Naive thymus-derived CD4-positive, alpha-beta T cell (primary cell): ENCODE measurements at regions of chr17 and their contacts with region 1.

Region 1: DNA sequence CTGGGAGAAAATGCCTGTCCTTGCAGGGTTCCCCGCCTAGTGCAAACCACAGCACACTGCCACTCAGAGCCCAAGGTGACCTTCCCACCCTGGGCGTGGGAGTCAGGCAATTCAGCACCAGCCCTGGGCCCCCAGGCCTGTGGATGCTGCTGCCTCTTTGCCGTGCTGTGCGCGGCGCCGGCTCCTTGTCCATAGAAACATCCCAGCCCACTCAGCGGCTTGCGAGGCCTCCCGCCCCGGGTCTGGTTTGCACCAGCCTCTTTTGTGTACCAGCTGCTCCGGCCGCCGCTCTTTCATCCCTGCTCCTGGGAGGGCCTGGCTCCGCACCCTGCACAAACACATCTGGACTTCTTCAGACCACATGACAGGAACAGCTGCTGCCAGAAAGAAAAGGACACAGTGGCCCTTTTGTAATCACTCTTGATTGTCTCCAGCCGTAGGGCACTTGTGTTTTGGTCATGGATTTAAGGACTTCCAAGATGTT is 75.4 kb upstream of the SDK2 start:
- DNase-seq: no peak
- ATAC-seq: no peak
- H3K4me3 ChIP-seq: no peak overlapping the region
- H3K4me3 Mint-ChIP-seq: peak overlapping the region in 4 of 10 donors; percentile 30 to 69 (median 59)
- H3K27ac ChIP-seq: no peak overlapping the region
- H3K27ac Mint-ChIP-seq: peak overlapping the region in 7 of 9 donors; percentile 48 to 98 (median 82)
- H3K4me1 ChIP-seq: peaks cover 18 to 45% of the 10 kb centered on the region in 2 donors
- H3K4me1 Mint-ChIP-seq: peaks cover 20 to 66% (median 57%) of the 10 kb centered on the region in 7 donors
- H3K27me3 ChIP-seq: no peaks in the 10 kb centered on the region
- H3K27me3 Mint-ChIP-seq: peaks cover 0 to 7% (median 0%) of the 10 kb centered on the region in 5 donors

Region 2: GRCh38 chr17:73667181-73667959 is 52.3 kb before region 1 on chr17:
- CTCF ChIA-PET with region 1: no interaction called
- POLR2A ChIA-PET with region 1: no interaction called
- intact Hi-C with region 1: no loop called
- DNase-seq: peak in 4 of 9 donors; percentile 17 to 39 (median 27)
- ATAC-seq: peak; percentile 73
- H3K4me3 ChIP-seq: no peak overlapping the region
- H3K4me3 Mint-ChIP-seq: peak overlapping the region in 9 of 10 donors; percentile 29 to 74 (median 63)
- H3K27ac ChIP-seq: no peak overlapping the region
- H3K27ac Mint-ChIP-seq: peak overlapping the region in 6 of 9 donors; percentile 20 to 69 (median 40)
- H3K4me1 ChIP-seq: peaks cover 0 to 17% of the 10 kb centered on the region in 2 donors
- H3K4me1 Mint-ChIP-seq: peaks cover 21 to 31% (median 28%) of the 10 kb centered on the region in 7 donors
- H3K27me3 ChIP-seq: no peaks in the 10 kb centered on the region
- H3K27me3 Mint-ChIP-seq: peaks cover 0 to 33% (median 0%) of the 10 kb centered on the region in 5 donors

Region 3: GRCh38 chr17:73782641-73783381 is 63.2 kb after region 1 on chr17:
- CTCF ChIA-PET with region 1: no interaction called
- POLR2A ChIA-PET with region 1: interaction called, 3 read pairs
- intact Hi-C with region 1: loop called in 1 of 2 experiments (anchors 5 kb)
- DNase-seq: peak in 3 of 9 donors; percentile 8 to 26 (median 9)
- ATAC-seq: peak; percentile 10
- H3K4me3 ChIP-seq: no peak overlapping the region
- H3K4me3 Mint-ChIP-seq: peak overlapping the region in 2 of 10 donors; percentile 6 to 16
- H3K27ac ChIP-seq: no peak overlapping the region
- H3K27ac Mint-ChIP-seq: peak overlapping the region in 5 of 9 donors; percentile 22 to 84 (median 61)
- H3K4me1 ChIP-seq: peaks cover 0 to 7% of the 10 kb centered on the region in 2 donors
- H3K4me1 Mint-ChIP-seq: peaks cover 0 to 22% (median 12%) of the 10 kb centered on the region in 7 donors
- H3K27me3 ChIP-seq: no peaks in the 10 kb centered on the region
- H3K27me3 Mint-ChIP-seq: peaks cover 0 to 2% (median 0%) of the 10 kb centered on the region in 5 donors

Region 4: DNA sequence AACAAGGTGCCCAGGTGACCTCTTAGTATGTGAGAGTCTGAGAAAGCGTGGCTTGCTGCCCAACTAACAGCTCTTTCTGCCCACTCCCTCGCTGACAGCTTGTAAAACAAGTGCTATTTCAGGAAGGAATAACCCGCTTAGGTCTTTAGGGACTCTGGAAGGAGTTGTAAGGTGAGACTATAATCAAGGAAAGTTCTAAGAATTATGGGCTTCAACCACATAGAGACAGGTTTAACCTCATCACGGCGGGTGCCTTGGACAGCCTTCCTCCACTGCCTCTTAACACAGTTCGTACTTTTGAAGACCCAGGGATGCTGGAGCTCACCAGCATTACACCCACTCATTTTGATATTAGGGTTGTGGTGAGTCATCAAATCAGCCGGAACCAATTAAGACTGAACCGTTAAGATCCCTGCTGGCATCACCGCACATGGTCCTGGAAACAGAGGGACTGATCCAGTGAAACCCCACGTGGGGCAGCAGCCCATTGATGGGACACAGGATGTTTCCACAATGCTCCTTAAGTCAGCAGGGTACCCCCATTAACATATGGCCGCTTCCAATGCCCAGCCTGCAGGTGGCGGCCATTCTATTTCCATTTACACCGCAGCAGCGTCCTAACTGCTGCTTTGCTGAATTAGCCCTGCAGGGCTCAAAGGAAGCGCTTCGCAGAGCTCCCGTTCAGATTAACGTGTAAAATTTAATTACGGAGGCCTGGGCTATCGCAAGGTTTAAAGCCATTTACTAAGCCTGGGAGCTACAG is 101.2 kb after region 1 on chr17:
- CTCF ChIA-PET with region 1: interaction called, 4 read pairs
- POLR2A ChIA-PET with region 1: interaction called, 80 read pairs
- intact Hi-C with region 1: no loop called
- DNase-seq: no peak
- ATAC-seq: no peak
- H3K4me3 ChIP-seq: no peak overlapping the region
- H3K4me3 Mint-ChIP-seq: peak overlapping the region in 1 of 10 donors; percentile 85
- H3K27ac ChIP-seq: no peak overlapping the region
- H3K27ac Mint-ChIP-seq: peak overlapping the region in 2 of 9 donors; percentile 6 to 30
- H3K4me1 ChIP-seq: peaks cover 0 to 29% of the 10 kb centered on the region in 2 donors
- H3K4me1 Mint-ChIP-seq: peaks cover 0 to 54% (median 38%) of the 10 kb centered on the region in 7 donors
- H3K27me3 ChIP-seq: no peaks in the 10 kb centered on the region
- H3K27me3 Mint-ChIP-seq: peaks cover 0 to 31% (median 0%) of the 10 kb centered on the region in 5 donors

Region 5: GRCh38 chr17:73827627-73828291 is 108.1 kb after region 1 on chr17:
- CTCF ChIA-PET with region 1: interaction called, 7 read pairs
- POLR2A ChIA-PET with region 1: interaction called, 80 read pairs
- intact Hi-C with region 1: loop called in 1 of 2 experiments (anchors 2 kb)
- DNase-seq: peak in 6 of 9 donors; percentile 41 to 66 (median 54)
- ATAC-seq: peak; percentile 67
- H3K4me3 ChIP-seq: no peak overlapping the region
- H3K4me3 Mint-ChIP-seq: peak overlapping the region; percentile 2 to 89 (median 74)
- H3K27ac ChIP-seq: peak overlapping the region; percentile 73
- H3K27ac Mint-ChIP-seq: peak overlapping the region; percentile 72 to 100 (median 91)
- H3K4me1 ChIP-seq: peaks cover 19 to 73% of the 10 kb centered on the region in 2 donors
- H3K4me1 Mint-ChIP-seq: peaks cover 6 to 98% (median 83%) of the 10 kb centered on the region in 7 donors
- H3K27me3 ChIP-seq: no peaks in the 10 kb centered on the region
- H3K27me3 Mint-ChIP-seq: peaks cover 0 to 9% (median 0%) of the 10 kb centered on the region in 5 donors

Region 6: DNA sequence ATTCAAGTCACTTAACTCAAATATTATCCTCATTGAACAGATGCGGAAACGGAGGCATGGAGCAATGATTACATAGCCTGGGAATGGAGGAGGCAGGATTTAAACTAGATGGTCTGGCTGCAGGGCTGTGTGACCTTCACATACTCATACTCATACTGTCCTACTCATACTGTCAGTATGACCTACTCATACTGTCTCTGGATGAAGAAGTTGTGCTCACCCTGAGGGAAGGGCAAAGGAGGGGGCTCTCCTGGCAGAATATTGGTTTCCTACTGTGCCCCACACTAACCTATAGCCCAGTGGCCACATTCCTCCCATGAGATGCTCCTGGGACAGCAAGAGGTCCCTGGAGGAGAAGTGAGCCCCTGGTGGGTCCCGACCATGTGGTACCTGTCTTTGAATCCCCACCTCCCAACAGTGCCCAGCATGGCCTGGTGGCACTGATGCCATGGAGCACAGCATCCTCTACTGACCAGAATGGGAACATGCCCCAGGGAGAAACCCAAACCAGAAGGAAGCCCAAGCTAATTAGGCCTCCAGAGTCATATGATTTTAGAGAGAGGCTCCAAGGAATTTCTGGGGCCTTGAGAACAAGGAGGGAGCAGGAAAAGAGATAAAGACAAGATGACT is 121.9 kb after region 1 on chr17:
- CTCF ChIA-PET with region 1: interaction called, 11 read pairs
- POLR2A ChIA-PET with region 1: interaction called, 4 read pairs
- intact Hi-C with region 1: no loop called
- DNase-seq: peak in 3 of 9 donors; percentile 29 to 49 (median 33)
- ATAC-seq: peak; percentile 58
- H3K4me3 ChIP-seq: no peak overlapping the region
- H3K4me3 Mint-ChIP-seq: no peak overlapping the region
- H3K27ac ChIP-seq: no peak overlapping the region
- H3K27ac Mint-ChIP-seq: peak overlapping the region in 6 of 9 donors; percentile 12 to 63 (median 54)
- H3K4me1 ChIP-seq: no peaks in the 10 kb centered on the region
- H3K4me1 Mint-ChIP-seq: peaks cover 0 to 27% (median 13%) of the 10 kb centered on the region in 7 donors
- H3K27me3 ChIP-seq: no peaks in the 10 kb centered on the region
- H3K27me3 Mint-ChIP-seq: no peaks in the 10 kb centered on the region

Region 7: DNA sequence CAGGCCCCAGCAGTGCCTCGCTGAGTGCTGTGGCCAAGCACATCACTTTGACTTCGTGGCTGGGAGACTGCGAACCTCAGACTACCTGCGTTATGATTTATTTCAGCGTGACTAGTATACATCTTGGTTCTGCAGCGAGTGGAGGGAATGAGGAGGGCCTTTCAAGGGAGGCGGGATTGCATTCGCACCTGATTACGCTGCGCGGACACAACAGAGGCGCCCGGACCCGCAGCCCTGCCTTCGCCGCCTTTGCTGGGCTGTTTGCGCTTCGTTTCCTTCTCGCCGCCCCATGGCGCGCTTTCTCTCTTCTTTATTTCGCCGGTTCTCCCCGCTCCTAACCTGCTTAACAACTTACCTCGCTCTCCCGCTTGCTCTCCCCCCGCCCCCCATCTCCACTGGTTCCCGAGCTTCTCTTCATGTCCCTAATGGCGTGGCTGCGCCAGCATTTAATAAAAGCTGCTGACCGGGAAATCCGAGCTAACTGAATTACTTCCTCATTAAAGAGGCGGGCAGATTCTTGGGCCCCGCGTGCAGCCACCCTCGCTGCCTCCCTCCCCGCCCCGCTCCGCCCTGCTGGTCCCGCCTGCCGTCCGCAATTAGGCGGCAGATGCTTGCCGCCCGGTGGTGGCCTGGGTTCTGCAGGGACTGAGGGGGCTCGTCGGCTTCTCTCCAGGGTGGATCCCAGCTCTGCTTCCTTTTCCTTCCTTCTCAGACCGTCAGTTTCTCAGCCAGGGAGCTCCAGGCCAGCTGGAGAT is 182.2 kb after region 1 on chr17:
- CTCF ChIA-PET with region 1: no interaction called
- POLR2A ChIA-PET with region 1: interaction called, 4 read pairs
- intact Hi-C with region 1: loop called in 1 of 2 experiments (anchors 5 kb)
- DNase-seq: peak in 5 of 9 donors; percentile 5 to 21 (median 13)
- ATAC-seq: peak; percentile 73
- H3K4me3 ChIP-seq: peak overlapping the region; percentile 48
- H3K4me3 Mint-ChIP-seq: peak overlapping the region; percentile 81 to 95 (median 90)
- H3K27ac ChIP-seq: no peak overlapping the region
- H3K27ac Mint-ChIP-seq: peak overlapping the region in 3 of 9 donors; percentile 28 to 72 (median 28)
- H3K4me1 ChIP-seq: peaks cover 0 to 6% of the 10 kb centered on the region in 2 donors
- H3K4me1 Mint-ChIP-seq: peaks cover 2 to 21% (median 12%) of the 10 kb centered on the region in 7 donors
- H3K27me3 ChIP-seq: peaks cover 0 to 3% of the 10 kb centered on the region in 2 donors
- H3K27me3 Mint-ChIP-seq: peaks cover 18 to 38% (median 27%) of the 10 kb centered on the region in 5 donors

Region 8: DNA sequence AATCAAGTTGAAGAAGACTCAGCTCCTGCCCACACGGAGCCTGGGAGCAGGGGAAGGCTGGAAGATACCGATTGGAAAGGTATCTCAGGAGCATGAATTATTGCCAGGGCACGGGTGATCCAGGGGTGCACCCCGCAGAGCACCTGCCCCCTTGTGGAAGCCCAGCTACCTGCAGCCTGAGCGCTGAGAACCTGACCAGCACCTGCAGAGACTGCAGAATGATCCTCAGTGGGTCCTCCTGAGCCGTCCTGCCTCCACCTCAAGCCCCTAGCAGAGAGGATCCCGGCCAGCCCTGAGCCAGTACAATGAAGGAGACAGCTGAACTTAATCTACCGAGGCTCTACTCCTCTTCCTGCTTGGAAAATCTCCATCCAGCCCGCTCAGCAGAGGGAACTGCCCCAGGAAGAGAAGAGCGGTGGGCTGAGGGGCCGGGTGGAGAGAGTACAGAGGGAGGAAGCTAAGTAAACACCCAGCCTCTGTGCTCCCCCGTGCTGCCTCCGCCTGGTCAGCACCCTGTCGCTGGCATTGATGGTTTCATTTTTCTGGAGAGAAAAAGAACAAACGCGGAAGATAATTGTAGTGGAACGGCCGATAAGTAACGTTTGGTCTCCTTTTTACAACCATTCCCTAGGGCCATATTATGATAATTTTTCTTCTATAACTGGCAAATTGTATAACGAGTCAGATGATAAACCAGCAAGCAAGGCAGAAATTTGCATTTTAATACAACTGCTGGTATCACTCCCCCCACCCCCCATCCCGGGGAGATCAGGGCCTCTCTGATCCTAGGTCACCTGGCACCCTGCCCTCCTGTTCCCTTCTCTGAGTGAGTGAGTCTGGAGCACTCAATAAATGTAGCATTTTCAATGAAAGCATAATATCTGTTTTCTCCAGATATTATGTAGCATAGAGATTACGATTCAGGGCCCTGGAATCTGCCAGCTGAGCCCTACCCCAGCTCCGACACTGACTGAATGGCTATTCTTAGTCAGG is 279.3 kb after region 1 on chr17:
- CTCF ChIA-PET with region 1: interaction called, 5 read pairs
- POLR2A ChIA-PET with region 1: no interaction called
- intact Hi-C with region 1: loop called in 1 of 2 experiments (anchors 5 kb)
- DNase-seq: peak; percentile 24 to 70 (median 54)
- ATAC-seq: peak; percentile 84
- H3K4me3 ChIP-seq: no peak overlapping the region
- H3K4me3 Mint-ChIP-seq: no peak overlapping the region
- H3K27ac ChIP-seq: no peak overlapping the region
- H3K27ac Mint-ChIP-seq: no peak overlapping the region
- H3K4me1 ChIP-seq: no peaks in the 10 kb centered on the region
- H3K4me1 Mint-ChIP-seq: peaks cover 0 to 8% (median 0%) of the 10 kb centered on the region in 7 donors
- H3K27me3 ChIP-seq: no peaks in the 10 kb centered on the region
- H3K27me3 Mint-ChIP-seq: peaks cover under 1 to 24% (median 14%) of the 10 kb centered on the region in 5 donors